Dendritic cell treated with granulocyte-macrophage colony-stimulating factor and Interleukin-4, amounts not matched to agents 40 ng/mL and 50 ng/mL, for 4 days (primary cell): ENCODE measurements at regions of chr2 and their contacts with region 1.

Region 1: DNA sequence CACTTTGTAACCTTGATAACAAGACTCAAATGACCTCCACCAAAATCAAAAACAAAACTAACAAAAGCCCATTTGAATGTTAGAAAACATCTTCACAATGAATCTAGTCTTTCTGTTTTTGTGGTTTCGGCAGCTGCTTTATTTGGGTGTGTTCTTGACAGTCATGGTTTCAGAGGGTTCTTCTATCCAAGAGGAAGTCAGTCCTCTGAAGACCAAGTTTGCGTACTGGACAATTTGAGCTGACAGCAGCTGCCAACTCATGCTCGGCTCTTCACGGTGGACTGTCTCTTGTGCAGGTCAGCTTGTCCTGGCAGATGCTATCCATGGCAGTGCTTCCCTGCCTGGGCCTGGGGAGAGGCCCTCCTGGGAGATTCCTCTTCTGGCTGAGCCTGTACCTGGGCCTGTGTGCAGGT is 91.0 kb downstream of the TMEM17 start:
- H3K4me3 Mint-ChIP-seq: no peak overlapping the region
- H3K27ac Mint-ChIP-seq: no peak overlapping the region
- H3K4me1 Mint-ChIP-seq: peaks cover 30% of the 10 kb centered on the region
- H3K27me3 Mint-ChIP-seq: no peaks in the 10 kb centered on the region

Region 2: DNA sequence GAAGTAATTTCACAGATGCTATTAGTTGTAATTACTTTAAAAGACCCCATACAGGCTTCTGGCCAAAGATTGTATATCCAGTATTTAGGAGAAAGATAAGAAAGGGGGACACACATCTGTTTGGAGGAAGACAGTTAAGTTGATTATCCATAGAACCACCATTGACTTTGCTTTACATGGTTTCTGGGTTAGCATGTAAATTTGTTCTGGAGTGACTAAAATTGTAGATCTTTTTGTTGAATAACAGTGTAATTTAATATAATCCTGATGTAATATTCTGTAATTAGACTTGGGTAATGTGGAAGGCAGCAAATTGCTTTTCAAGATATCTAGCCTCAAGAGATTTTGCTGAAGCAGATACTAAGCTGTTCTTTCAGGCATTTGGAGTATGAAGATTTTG is 492.3 kb before region 1 on chr2:
- intact Hi-C with region 1: loop called (anchors 1 kb)
- H3K4me3 Mint-ChIP-seq: no peak overlapping the region
- H3K27ac Mint-ChIP-seq: no peak overlapping the region
- H3K4me1 Mint-ChIP-seq: no peaks in the 10 kb centered on the region
- H3K27me3 Mint-ChIP-seq: no peaks in the 10 kb centered on the region

Region 3: DNA sequence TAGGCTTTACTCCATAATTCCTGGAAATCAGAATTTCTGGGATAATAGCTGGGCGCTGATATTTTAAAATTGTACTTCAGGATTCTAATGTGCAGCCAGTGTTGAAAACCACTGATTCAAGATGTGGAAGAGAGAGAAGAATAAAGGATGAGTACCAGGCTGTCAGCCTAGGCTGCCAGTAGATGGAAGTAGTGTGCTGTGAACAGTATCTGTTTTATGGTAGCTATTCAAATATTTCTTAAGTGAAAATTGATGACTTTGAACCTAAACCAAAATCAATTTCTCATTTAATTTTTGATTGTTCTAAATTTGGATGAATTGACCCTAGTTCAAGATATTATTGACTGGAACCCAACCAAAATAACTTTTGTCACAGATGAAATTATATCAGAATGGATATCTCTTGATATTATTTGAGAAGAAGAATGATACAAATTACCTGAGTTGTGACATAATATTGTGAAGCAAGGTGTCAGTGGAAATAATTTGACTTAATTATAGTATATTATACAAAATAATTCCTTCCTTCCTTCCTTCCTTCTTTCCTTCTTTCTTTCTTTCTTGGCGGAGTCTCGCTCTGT is 421.5 kb before region 1 on chr2:
- intact Hi-C with region 1: loop called (anchors 2 kb)
- H3K4me3 Mint-ChIP-seq: no peak overlapping the region
- H3K27ac Mint-ChIP-seq: no peak overlapping the region
- H3K4me1 Mint-ChIP-seq: peaks cover 11% of the 10 kb centered on the region
- H3K27me3 Mint-ChIP-seq: no peaks in the 10 kb centered on the region